Activated CD4-positive, alpha-beta T cell treated with anti-CD3 and anti-CD28 coated beads, Interleukin-2, amount 10 ng/mL, durations not matched to agents 24 days and 14 days (primary cell): ENCODE measurements at regions of chr7 and their contacts with region 1.

Region 1: GRCh38 chr7:11212080-11212711 is 238.5 kb downstream of the PHF14 start:
- DNase-seq: peak; percentile 83
- H3K4me3 Mint-ChIP-seq: no peak overlapping the region
- H3K27ac Mint-ChIP-seq: no peak overlapping the region
- H3K4me1 Mint-ChIP-seq: peaks cover 6% of the 10 kb centered on the region
- H3K27me3 Mint-ChIP-seq: no peaks in the 10 kb centered on the region

Region 2: GRCh38 chr7:10889266-10889898 is 322.8 kb before region 1 on chr7:
- intact Hi-C with region 1: loop called (anchors 2 kb)
- DNase-seq: peak; percentile 77
- H3K4me3 Mint-ChIP-seq: peak overlapping the region; percentile 37
- H3K27ac Mint-ChIP-seq: no peak overlapping the region
- H3K4me1 Mint-ChIP-seq: peaks cover 7% of the 10 kb centered on the region
- H3K27me3 Mint-ChIP-seq: no peaks in the 10 kb centered on the region

Region 3: GRCh38 chr7:10939911-10940703 is 272.1 kb before region 1 on chr7:
- intact Hi-C with region 1: loop called (anchors 1 kb)
- DNase-seq: peak; percentile 96
- H3K4me3 Mint-ChIP-seq: no peak overlapping the region
- H3K27ac Mint-ChIP-seq: no peak overlapping the region
- H3K4me1 Mint-ChIP-seq: peaks cover 12% of the 10 kb centered on the region
- H3K27me3 Mint-ChIP-seq: no peaks in the 10 kb centered on the region

Region 4: GRCh38 chr7:10973061-10973944 is 238.9 kb before region 1 on chr7 and contains the start of gene PHF14:
- intact Hi-C with region 1: loop called (anchors 2 kb)
- DNase-seq: peak; percentile 98
- H3K4me3 Mint-ChIP-seq: peak within 1 kb of the TSS; percentile 94
- H3K27ac Mint-ChIP-seq: peak within 1 kb of the TSS; percentile 93
- H3K4me1 Mint-ChIP-seq: peaks cover 32% of the 10 kb centered on the region
- H3K27me3 Mint-ChIP-seq: peaks cover 17% of the 10 kb centered on the region
- total RNA-seq, gene PHF14: 36.7 and 42.7 TPM in 2 replicates

Region 5: GRCh38 chr7:11120068-11120664 is 92.0 kb before region 1 on chr7:
- intact Hi-C with region 1: loop called (anchors 1 kb)
- DNase-seq: no peak
- H3K4me3 Mint-ChIP-seq: peak overlapping the region; percentile 44
- H3K27ac Mint-ChIP-seq: peak overlapping the region; percentile 79
- H3K4me1 Mint-ChIP-seq: peaks cover 24% of the 10 kb centered on the region
- H3K27me3 Mint-ChIP-seq: no peaks in the 10 kb centered on the region

Region 6: DNA sequence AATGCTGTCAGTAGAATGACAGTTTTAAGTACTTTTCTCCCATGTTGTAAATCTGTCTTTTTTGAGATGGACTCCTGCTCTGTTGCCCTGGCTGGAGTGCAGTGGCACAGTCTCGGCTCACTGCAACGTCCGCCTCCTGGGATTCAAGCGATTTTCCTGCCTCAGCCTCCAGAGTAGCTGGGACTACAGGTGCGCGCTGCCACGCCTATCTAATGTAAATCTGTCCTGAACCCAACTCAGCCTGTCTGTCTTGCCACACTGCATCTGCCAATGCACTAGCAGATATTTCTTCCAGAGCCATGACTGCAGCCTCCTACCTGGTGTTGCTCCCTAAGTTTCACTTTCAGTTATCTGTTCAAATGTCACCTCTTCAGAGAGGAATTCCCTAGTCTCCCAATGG is 25.5 kb after region 1 on chr7:
- intact Hi-C with region 1: loop called (anchors 1 kb)
- DNase-seq: no peak
- H3K4me3 Mint-ChIP-seq: no peak overlapping the region
- H3K27ac Mint-ChIP-seq: no peak overlapping the region
- H3K4me1 Mint-ChIP-seq: no peaks in the 10 kb centered on the region
- H3K27me3 Mint-ChIP-seq: no peaks in the 10 kb centered on the region

Region 7: GRCh38 chr7:11343818-11344413 is 131.7 kb after region 1 on chr7:
- intact Hi-C with region 1: no loop called
- DNase-seq: peak; percentile 69
- H3K4me3 Mint-ChIP-seq: no peak overlapping the region
- H3K27ac Mint-ChIP-seq: no peak overlapping the region
- H3K4me1 Mint-ChIP-seq: peaks cover 2% of the 10 kb centered on the region
- H3K27me3 Mint-ChIP-seq: peaks cover 9% of the 10 kb centered on the region